ENCODE measurements at regions of chr4 and their contacts with region 1.

Region 1: GRCh38 chr4:122914292-122914904 is 8.0 kb downstream of the NUDT6 start:
- DNase-seq: peak; percentile 43
- ATAC-seq: peak; percentile 89
- H3K4me3 ChIP-seq: no peak overlapping the region
- H3K27ac ChIP-seq: no peak overlapping the region
- H3K4me1 ChIP-seq: peaks cover 14% of the 10 kb centered on the region
- H3K27me3 ChIP-seq: no peaks in the 10 kb centered on the region
- CTCF ChIP-seq: peak; percentile 79
- EP300 ChIP-seq: no peak
- POLR2A ChIP-seq: no peak
- RAD21 ChIP-seq: peak; percentile 52; the same call in 1 of the 2 replicates

Region 2: GRCh38 chr4:122602277-122603142 is 311.9 kb before region 1 on chr4:
- CTCF ChIA-PET with region 1: interaction called, 3 read pairs
- POLR2A ChIA-PET with region 1: no interaction called
- in situ Hi-C with region 1: loop called (anchors 10 kb)
- intact Hi-C with region 1: loop called (anchors 1 kb)
- DNase-seq: peak; percentile 36
- ATAC-seq: peak; percentile 92
- H3K4me3 ChIP-seq: no peak overlapping the region
- H3K27ac ChIP-seq: no peak overlapping the region
- H3K4me1 ChIP-seq: no peaks in the 10 kb centered on the region
- H3K27me3 ChIP-seq: no peaks in the 10 kb centered on the region; a peak in 1 of 5 replicates
- CTCF ChIP-seq: peak; percentile 61
- EP300 ChIP-seq: no peak
- POLR2A ChIP-seq: no peak
- RAD21 ChIP-seq: no peak

Region 3: GRCh38 chr4:122732329-122733026 is 181.9 kb before region 1 on chr4 and contains the start of gene BBS12:
- CTCF ChIA-PET with region 1: interaction called, 4 read pairs
- POLR2A ChIA-PET with region 1: no interaction called
- in situ Hi-C with region 1: no loop called
- intact Hi-C with region 1: loop called (anchors 2 kb)
- DNase-seq: peak; percentile 98
- ATAC-seq: peak; percentile 97
- H3K4me3 ChIP-seq: peak within 1 kb of the TSS; percentile 77 to 84 (median 83)
- H3K27ac ChIP-seq: peak within 1 kb of the TSS; percentile 60
- H3K4me1 ChIP-seq: peaks cover 15% of the 10 kb centered on the region
- H3K27me3 ChIP-seq: no peaks in the 10 kb centered on the region; a peak in 1 of 5 replicates
- CTCF ChIP-seq: peak; percentile 80
- EP300 ChIP-seq: 0 out of 4 replicates have a peak, but pooled peaks of 1 of the 2 experiments have one; percentile 17
- POLR2A ChIP-seq: no peak
- RAD21 ChIP-seq: peak; percentile 57; the same call in 1 of the 2 replicates
- total RNA-seq, gene BBS12: 1.7 and 2.1 TPM in 2 replicates

Region 4: DNA sequence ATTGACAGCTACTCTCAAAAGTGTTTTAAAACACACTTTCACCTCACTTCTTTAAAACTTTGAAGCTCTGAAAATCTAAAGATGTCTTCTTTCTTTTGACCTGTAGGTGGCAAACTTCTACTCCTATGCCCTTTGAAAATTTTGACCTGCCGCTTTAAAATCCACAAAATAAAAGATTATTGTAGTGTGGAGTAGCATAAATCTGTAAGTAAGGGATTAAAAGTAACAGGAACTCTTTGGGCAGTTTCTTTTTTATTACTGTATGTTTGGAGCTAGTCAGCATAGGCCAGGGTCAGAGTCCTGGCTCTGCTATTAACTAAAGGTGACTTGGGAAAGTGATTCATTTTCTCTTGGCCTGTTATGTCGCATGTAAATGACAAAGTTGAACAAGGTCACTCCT is 156.4 kb before region 1 on chr4:
- CTCF ChIA-PET with region 1: interaction called, 29 read pairs
- POLR2A ChIA-PET with region 1: no interaction called
- in situ Hi-C with region 1: no loop called
- intact Hi-C with region 1: loop called (anchors 1 kb)
- DNase-seq: no peak
- ATAC-seq: peak; percentile 35; the same call in 1 of the 3 replicates
- H3K4me3 ChIP-seq: peak overlapping the region in 1 of 3 experiments; percentile 27; a peak in 1 of 6 replicates
- H3K27ac ChIP-seq: no peak overlapping the region
- H3K4me1 ChIP-seq: peaks cover 16% of the 10 kb centered on the region
- H3K27me3 ChIP-seq: no peaks in the 10 kb centered on the region
- CTCF ChIP-seq: peak; percentile 61
- EP300 ChIP-seq: no peak
- POLR2A ChIP-seq: no peak
- RAD21 ChIP-seq: 0 out of 2 replicates have a peak, but pooled peaks have one; percentile 23

Region 5: DNA sequence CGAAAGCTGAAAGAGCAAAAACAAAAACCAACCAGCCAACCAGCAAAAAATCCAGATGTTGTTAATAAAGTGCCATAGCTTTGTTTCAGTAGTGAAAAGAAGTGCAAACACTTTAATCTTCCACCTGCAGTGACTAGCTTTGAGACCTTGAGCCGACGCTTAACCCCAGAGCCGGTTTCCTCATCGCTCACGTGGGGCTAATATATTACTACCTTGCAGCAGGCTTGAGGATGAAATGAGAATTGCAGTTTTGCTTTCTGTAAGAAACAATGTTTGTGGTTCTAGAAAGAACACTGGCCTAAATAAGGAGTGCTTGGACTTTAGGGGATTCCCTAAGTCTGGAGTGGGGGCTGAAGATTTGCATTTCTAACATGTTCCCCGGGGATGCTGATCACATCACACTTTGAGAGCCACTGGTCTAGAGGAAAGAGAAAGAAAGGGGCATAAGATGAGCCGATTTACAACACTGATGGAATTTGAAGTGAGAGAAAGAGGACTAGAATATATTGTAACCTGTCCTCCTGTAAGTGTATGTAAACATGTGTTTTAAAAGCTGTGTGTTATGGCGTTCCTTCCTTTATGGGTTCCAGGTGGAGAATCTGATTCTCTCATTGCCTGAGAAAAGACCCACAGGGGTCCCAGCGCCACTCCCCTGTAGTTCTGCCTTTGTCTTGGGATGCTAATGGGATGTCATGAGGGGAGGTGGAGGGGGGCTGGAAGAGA is 86.4 kb before region 1 on chr4:
- CTCF ChIA-PET with region 1: no interaction called
- POLR2A ChIA-PET with region 1: no interaction called
- in situ Hi-C with region 1: no loop called
- intact Hi-C with region 1: loop called (anchors 5 kb)
- DNase-seq: peak; percentile 11
- ATAC-seq: peak; percentile 84
- H3K4me3 ChIP-seq: peak overlapping the region in 2 of 3 experiments; percentile 55 to 72; a peak in 3 of 6 replicates
- H3K27ac ChIP-seq: no peak overlapping the region
- H3K4me1 ChIP-seq: peaks cover 12% of the 10 kb centered on the region
- H3K27me3 ChIP-seq: peaks cover 4 to 33% of the 10 kb centered on the region in 2 experiments
- CTCF ChIP-seq: no peak
- EP300 ChIP-seq: no peak
- POLR2A ChIP-seq: no peak
- RAD21 ChIP-seq: no peak

Measured in HepG2 (cell line).